Natural killer cell (primary cell): ENCODE measurements at regions of chr12 and their contacts with region 1.

Region 1: GRCh38 chr12:47397664-47398281 is 308.1 kb downstream of the RPAP3 start:
- DNase-seq: peak in 1 of 2 donors; percentile 77
- ATAC-seq: peak; percentile 90 to 97 (median 97)
- H3K4me3 ChIP-seq: no peak overlapping the region
- H3K4me3 Mint-ChIP-seq: no peak overlapping the region
- H3K27ac ChIP-seq: peak overlapping the region; percentile 11
- H3K27ac Mint-ChIP-seq: peak overlapping the region in 1 of 2 donors; percentile 76
- H3K4me1 ChIP-seq: peaks cover 13% of the 10 kb centered on the region
- H3K4me1 Mint-ChIP-seq: peaks cover 3 to 18% of the 10 kb centered on the region in 2 donors
- H3K27me3 ChIP-seq: no peaks in the 10 kb centered on the region
- H3K27me3 Mint-ChIP-seq: no peaks in the 10 kb centered on the region
- CTCF ChIP-seq: peak; percentile 68

Region 2: DNA sequence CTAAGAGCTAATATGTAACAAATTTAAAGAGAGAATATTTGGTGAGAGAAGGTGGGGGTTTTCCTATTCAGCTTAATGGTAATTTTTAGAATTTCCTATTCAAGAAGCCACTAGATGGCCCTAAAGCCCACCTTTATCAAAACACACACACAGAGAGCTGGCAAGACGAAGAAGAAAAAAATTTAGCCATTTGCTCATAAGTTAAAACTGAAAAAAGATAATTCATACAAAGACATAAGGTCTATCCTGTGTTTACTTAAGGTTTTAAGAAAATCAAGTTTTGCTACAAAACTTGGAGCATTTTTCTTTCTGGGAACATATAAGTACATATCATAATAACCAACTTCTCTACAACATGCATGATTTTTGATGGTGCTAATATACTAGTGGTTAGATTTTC is 365.1 kb before region 1 on chr12:
- intact Hi-C with region 1: loop called (anchors 1 kb)
- DNase-seq: peak in 1 of 2 donors; percentile 80
- ATAC-seq: peak; percentile 57 to 88 (median 85)
- H3K4me3 ChIP-seq: no peak overlapping the region
- H3K4me3 Mint-ChIP-seq: no peak overlapping the region
- H3K27ac ChIP-seq: no peak overlapping the region
- H3K27ac Mint-ChIP-seq: no peak overlapping the region
- H3K4me1 ChIP-seq: no peaks in the 10 kb centered on the region
- H3K4me1 Mint-ChIP-seq: no peaks in the 10 kb centered on the region
- H3K27me3 ChIP-seq: no peaks in the 10 kb centered on the region
- H3K27me3 Mint-ChIP-seq: peaks cover 4 to 6% of the 10 kb centered on the region in 2 donors
- CTCF ChIP-seq: peak; percentile 67

Region 3: GRCh38 chr12:47207340-47207717 is 190.4 kb before region 1 on chr12:
- intact Hi-C with region 1: loop called (anchors 5 kb)
- DNase-seq: peak; percentile 35 to 68
- ATAC-seq: peak; percentile 58 to 78 (median 63)
- H3K4me3 ChIP-seq: no peak overlapping the region
- H3K4me3 Mint-ChIP-seq: peak overlapping the region; percentile 63
- H3K27ac ChIP-seq: peak overlapping the region; percentile 82
- H3K27ac Mint-ChIP-seq: peak overlapping the region; percentile 97 to 99
- H3K4me1 ChIP-seq: peaks cover 60% of the 10 kb centered on the region
- H3K4me1 Mint-ChIP-seq: peaks cover 70 to 78% of the 10 kb centered on the region in 2 donors
- H3K27me3 ChIP-seq: no peaks in the 10 kb centered on the region
- H3K27me3 Mint-ChIP-seq: no peaks in the 10 kb centered on the region
- CTCF ChIP-seq: no peak

Region 4: DNA sequence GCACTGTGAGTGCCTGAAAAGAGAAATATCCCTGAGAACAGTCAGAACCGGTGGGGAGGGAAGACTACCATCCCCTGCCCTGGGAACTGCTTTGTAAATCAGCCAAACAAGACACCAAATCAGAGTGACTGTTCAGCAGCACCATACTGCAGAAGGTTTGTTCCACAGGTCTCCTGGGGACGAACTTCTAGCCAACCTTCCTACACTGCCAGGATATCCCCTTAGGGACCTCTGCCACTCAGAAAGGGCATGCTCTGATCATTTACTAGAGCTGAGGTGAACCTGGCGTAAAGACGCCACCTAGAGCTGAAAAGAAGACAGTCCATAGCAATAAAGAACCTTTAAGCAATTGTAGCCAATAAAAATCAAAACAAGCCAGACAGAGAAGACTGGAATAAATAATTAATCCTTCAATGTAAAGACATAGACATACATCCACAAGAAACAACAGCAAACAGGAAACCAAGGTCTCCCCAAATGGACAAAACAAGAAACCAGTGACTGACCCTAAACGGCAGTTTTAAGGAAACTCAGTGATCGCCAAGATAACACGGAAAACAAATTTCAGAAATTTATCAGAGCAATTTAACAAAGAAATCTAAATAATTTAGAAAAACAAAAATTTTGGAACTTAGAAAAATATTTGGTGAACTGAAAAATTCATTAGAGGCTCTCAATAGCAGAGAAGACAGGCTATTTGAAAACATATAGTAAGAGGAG is 89.9 kb before region 1 on chr12:
- intact Hi-C with region 1: loop called (anchors 1 kb)
- DNase-seq: peak; percentile 35 to 81
- ATAC-seq: peak; percentile 92 to 95 (median 93)
- H3K4me3 ChIP-seq: peak overlapping the region; percentile 42
- H3K4me3 Mint-ChIP-seq: peak overlapping the region; percentile 92
- H3K27ac ChIP-seq: peak overlapping the region; percentile 51
- H3K27ac Mint-ChIP-seq: peak overlapping the region; percentile 86 to 93
- H3K4me1 ChIP-seq: peaks cover 12% of the 10 kb centered on the region
- H3K4me1 Mint-ChIP-seq: peaks cover 22% of the 10 kb centered on the region in 2 donors
- H3K27me3 ChIP-seq: no peaks in the 10 kb centered on the region
- H3K27me3 Mint-ChIP-seq: no peaks in the 10 kb centered on the region
- CTCF ChIP-seq: peak; percentile 68

Region 5: GRCh38 chr12:47473091-47473490 is 75.3 kb after region 1 on chr12:
- intact Hi-C with region 1: no loop called
- DNase-seq: no peak
- ATAC-seq: no peak
- H3K4me3 ChIP-seq: no peak overlapping the region
- H3K4me3 Mint-ChIP-seq: no peak overlapping the region
- H3K27ac ChIP-seq: no peak overlapping the region
- H3K27ac Mint-ChIP-seq: no peak overlapping the region
- H3K4me1 ChIP-seq: no peaks in the 10 kb centered on the region
- H3K4me1 Mint-ChIP-seq: no peaks in the 10 kb centered on the region
- H3K27me3 ChIP-seq: peaks cover 3% of the 10 kb centered on the region
- H3K27me3 Mint-ChIP-seq: peaks cover 12 to 29% of the 10 kb centered on the region in 2 donors
- CTCF ChIP-seq: no peak

Region 6: DNA sequence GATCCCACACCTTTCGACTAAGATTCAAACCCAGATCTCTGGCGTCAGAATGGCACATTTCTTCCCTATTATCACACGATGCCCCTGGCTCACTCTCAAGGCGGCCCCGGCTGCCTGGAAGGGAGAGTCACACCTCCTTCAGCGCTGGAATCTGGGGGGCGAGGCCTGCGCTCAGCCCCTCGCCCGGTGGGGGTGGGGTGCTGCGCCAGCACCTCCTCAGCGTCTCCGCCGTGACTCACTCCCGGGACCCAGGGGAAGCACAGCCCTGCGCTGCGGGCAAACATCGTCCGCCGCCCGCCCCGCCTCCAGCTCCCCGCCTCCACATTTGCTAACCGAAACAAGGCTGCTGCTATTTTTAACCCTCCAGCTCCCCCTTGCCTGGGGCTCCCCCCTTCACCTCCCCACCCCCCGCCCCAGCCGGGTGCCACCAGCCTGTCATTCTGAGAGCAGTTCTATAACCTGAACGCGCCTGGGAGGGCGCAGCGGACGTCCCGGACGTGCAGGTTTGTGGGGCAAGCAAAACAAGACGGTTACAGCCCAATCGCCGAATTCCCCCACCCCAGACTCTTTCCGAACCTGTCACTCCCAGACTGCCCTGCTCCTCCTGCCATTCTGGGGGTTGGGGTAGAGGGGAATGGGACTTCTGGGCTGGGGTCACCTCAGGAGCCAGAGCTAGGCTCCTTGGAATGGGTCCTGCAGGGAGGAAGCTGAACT is 415.2 kb after region 1 on chr12:
- intact Hi-C with region 1: loop called (anchors 10 kb)
- DNase-seq: peak; percentile 82 to 94
- ATAC-seq: peak; percentile 60 to 81 (median 72)
- H3K4me3 ChIP-seq: peak overlapping the region; percentile 42
- H3K4me3 Mint-ChIP-seq: peak overlapping the region; percentile 88
- H3K27ac ChIP-seq: peak overlapping the region; percentile 87
- H3K27ac Mint-ChIP-seq: peak overlapping the region; percentile 91 to 92
- H3K4me1 ChIP-seq: peaks cover 98% of the 10 kb centered on the region
- H3K4me1 Mint-ChIP-seq: peaks cover 85 to 94% of the 10 kb centered on the region in 2 donors
- H3K27me3 ChIP-seq: no peaks in the 10 kb centered on the region
- H3K27me3 Mint-ChIP-seq: no peaks in the 10 kb centered on the region
- CTCF ChIP-seq: no peak